ENCODE measurements at regions of chr1 and their contacts with region 1.

Region 1: DNA sequence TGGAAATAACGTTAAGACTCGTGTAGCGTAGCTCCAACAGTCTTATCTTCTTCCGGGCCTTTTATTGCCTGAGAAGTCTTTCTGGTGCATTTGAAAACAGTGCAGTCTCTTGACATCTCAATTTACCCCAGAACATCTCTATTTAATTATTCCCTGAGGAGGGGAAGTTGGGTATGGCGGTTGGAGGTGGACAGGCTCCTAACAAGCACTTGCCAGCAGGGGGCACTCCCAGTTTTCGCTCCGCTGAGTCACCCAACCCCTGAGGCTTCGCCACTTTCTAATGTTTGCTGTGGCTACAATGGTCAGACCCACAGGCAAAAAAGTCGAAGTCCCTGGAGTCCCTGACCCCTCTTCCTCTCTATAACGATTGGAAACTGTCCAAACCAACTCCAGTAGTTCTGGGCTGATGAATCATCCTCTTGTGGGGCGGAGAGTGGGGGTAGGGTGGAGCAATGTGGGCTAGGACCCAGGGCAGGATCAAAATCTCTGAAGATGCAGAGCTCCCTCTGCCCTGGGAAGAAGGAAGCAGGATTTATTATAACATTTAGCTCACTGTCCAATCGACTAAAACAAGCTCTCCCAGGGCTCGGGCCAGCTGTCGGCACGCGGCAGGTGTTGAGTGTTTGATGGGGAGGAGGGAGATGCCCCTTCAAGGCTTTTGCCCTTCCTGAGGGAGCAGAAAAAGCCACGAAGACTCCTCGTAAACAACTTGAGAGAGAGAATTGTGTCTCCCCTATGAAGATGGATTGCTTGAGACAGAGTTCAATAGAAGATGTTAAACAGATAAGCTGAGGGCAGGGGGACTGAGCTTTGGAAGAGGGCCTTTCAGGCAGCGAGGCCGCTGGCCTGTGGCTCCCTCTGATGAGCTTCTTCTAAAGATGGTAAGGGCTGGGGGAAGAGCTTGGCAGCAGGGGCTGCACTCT is 85.7 kb downstream of the BRINP2 start:
- DNase-seq: peak; percentile 72
- H3K4me3 ChIP-seq: no peak overlapping the region
- H3K27ac ChIP-seq: no peak overlapping the region
- H3K4me1 ChIP-seq: peaks cover 0 to 16% (median 10%) of the 10 kb centered on the region in 4 donors
- H3K27me3 ChIP-seq: no peaks in the 10 kb centered on the region
- CTCF ChIP-seq: peak in 3 of 4 experiments; percentile 43 to 65 (median 55)
- EP300 ChIP-seq: no peak
- POLR2A ChIP-seq: no peak

Region 2: DNA sequence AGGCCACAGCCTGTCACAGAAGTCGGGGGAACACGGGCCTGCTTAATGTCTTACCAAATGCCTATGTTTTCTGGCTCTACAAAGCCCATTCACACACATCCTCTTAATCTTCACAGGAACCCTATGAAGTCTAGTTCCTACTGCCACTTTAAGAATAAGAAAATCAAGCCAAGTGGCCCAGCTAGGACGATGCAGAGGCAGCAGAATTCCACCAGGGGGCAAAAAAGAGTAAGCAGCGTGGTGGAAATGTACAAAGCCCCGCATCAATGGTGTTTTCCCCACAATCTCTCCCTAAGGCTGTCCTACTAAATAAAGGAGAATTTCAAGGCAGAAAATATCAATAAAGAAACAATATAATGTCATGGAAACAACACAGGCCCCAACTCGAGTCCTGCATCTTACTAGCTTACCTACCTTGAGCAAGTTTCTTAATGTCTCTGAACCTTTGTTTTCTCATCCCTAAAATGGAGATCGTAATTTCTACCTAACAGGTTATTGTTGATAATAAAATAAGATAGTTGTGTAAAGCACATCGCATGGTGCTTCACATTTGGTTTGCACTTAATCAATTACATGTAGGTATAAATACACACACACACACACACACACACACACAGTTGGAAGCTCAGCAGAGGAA is 692.0 kb after region 1 on chr1:
- intact Hi-C with region 1: loop called (anchors 5 kb)
- DNase-seq: peak; percentile 75
- H3K4me3 ChIP-seq: no peak overlapping the region
- H3K27ac ChIP-seq: no peak overlapping the region
- H3K4me1 ChIP-seq: peaks cover 0 to 9% (median 0%) of the 10 kb centered on the region in 4 donors
- H3K27me3 ChIP-seq: no peaks in the 10 kb centered on the region
- CTCF ChIP-seq: peak; percentile 28 to 81 (median 78)
- EP300 ChIP-seq: no peak
- POLR2A ChIP-seq: no peak